Prostate gland (tissue), 2 donors: ENCODE measurements at regions of chr2 and their contacts with region 1.

Region 1: GRCh38 chr2:25311866-25312575 is 29.7 kb downstream of the DNMT3A start:
- DNase-seq: no peak
- H3K4me3 ChIP-seq: no peak overlapping the region
- H3K27ac ChIP-seq: no peak overlapping the region
- H3K4me1 ChIP-seq: peaks cover 20% of the 10 kb centered on the region
- H3K27me3 ChIP-seq: no peaks in the 10 kb centered on the region
- CTCF ChIP-seq: no peak
- POLR2A ChIP-seq: no peak

Region 2: GRCh38 chr2:25323042-25323514 is 11.1 kb after region 1 on chr2:
- intact Hi-C with region 1: loop called (anchors 1 kb)
- DNase-seq: no peak
- H3K4me3 ChIP-seq: no peak overlapping the region
- H3K27ac ChIP-seq: no peak overlapping the region
- H3K4me1 ChIP-seq: no peaks in the 10 kb centered on the region
- H3K27me3 ChIP-seq: no peaks in the 10 kb centered on the region
- CTCF ChIP-seq: no peak
- POLR2A ChIP-seq: no peak

Region 3: DNA sequence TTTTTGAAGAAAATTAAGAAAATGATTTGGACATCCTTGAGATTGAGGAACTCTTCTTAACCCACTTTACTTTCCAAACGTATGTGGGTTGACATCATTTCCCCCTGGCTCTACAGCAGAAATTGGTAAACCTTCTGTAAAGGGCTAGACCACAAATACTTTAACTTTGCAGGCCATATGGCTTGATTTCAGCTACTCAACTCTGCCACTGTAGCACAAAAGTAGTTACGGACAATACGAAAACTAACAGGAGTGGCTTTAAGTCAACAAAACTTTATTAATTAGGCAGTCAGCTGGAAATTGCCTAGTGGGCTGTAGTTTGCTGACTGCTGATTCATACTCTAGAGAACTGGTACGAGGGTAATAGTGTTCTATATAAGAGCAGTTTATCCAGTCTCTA is 444.5 kb after region 1 on chr2:
- intact Hi-C with region 1: no loop called
- DNase-seq: no peak
- H3K4me3 ChIP-seq: no peak overlapping the region
- H3K27ac ChIP-seq: peak overlapping the region in 1 of 2 donors; percentile 79
- H3K4me1 ChIP-seq: peaks cover 5% of the 10 kb centered on the region
- H3K27me3 ChIP-seq: no peaks in the 10 kb centered on the region
- CTCF ChIP-seq: no peak
- POLR2A ChIP-seq: no peak